ENCODE measurements at regions of chr16 and their contacts with region 1.

Region 1: DNA sequence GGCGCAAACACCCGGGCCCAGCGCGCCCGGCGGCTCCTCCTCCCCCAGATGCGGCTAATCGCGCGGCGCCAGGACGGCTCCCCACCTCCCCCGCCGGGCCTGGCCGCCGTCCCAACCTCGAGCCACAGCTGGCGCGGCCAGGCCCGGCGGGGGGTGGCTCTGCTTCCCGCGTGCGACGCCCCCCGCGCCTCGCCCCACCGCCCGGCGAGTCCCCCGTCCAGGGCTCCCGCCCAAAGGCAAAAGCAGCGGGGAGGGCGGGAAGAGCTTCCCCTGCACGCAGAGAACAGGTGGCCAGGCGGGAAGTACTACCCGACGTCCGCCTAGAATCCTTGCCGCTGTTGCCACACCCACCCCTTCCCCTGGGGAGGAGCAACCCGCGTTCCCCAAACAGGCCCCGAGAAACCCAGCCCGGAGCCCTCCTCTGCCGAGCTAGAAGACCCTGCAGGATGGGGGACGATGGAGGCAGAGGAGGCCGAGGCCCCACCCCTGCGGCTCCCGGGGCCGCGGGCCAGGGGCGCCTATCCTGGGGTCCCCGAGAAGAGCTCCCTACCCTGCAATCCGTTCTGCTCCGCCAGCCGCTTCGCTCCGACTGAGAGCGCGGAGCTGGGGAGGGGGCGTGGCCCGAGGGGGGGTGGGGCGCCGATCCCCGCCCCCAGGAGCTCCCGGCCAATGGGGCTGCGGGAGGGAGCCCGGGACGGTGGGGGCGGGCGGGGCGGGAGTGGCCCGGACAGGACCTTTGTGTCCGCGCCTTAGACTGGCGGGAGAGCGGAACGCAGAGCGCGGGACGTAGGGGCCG is at the start of gene CARHSP1:
- DNase-seq: peak; percentile 51 to 85 (median 70)
- H3K4me3 ChIP-seq: peak within 1 kb of the TSS; percentile 55 to 94 (median 77)
- H3K27ac ChIP-seq: peak within 1 kb of the TSS; percentile 66 to 98 (median 92)
- H3K27me3 ChIP-seq: no peaks in the 10 kb centered on the region
- CTCF ChIP-seq: peak in 3 of 56 donors; percentile 8 to 30 (median 17)
- total RNA-seq, gene CARHSP1: 19.2 to 95.1 (median 46.3) TPM

Region 2: DNA sequence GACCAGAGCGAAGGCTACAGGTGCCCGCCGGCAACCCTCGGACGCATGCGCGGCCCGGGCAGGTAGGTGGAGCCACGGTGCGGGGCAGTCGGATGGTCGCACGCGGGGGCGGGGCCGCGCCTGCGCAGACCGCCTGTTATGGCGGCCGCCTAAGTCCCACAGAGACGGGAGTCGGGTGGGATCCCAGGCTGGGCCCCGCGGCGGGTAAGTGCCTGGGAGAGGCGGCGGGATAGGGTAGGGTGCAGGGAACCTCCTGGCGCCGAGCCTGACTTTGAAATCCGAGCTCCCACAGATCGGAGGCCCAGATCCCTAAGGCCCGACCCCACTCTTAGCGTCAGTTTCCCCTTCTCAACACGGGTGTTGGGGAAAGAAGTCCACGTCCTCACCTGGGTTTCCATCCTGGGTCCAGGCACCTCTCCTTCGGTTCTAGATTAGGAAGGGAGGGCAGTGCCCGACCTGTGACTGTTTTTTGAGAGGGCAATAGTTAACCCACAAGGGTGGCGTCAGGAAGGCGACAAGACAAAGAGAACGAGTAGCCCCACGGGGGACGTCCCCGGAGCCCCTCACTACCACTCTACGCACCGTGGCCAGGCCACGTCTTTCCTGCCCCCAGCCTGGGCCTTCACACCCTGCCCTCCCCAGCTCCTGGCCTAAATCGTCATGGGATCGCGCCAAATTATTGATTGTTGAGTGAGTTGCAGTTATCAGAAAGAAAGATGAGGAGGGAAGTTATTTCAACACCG is 246.9 kb before region 1 on chr16 and contains the start of gene METTL22:
- intact Hi-C with region 1: loop called in 1 of 2 experiments (anchors 5 kb)
- DNase-seq: peak; percentile 83 to 94 (median 88)
- H3K4me3 ChIP-seq: peak within 1 kb of the TSS; percentile 46 to 100 (median 91)
- H3K27ac ChIP-seq: peak within 1 kb of the TSS in 53 of 59 donors; percentile 7 to 93 (median 72)
- H3K27me3 ChIP-seq: no peaks in the 10 kb centered on the region
- CTCF ChIP-seq: peak in 32 of 56 donors; percentile 1 to 54 (median 24)
- total RNA-seq, gene METTL22: 22.8 to 59.0 (median 39.5) TPM

Region 3: GRCh38 chr16:8674413-8675022 is 194.1 kb before region 1 on chr16 and contains the start of gene ABAT:
- intact Hi-C with region 1: loop called (anchors 5 to 10 kb)
- DNase-seq: peak; percentile 86 to 99 (median 92)
- H3K4me3 ChIP-seq: peak within 1 kb of the TSS; percentile 62 to 98 (median 85)
- H3K27ac ChIP-seq: peak within 1 kb of the TSS in 46 of 59 donors; percentile 2 to 85 (median 65)
- H3K27me3 ChIP-seq: no peaks in the 10 kb centered on the region
- CTCF ChIP-seq: peak in 21 of 56 donors; percentile 11 to 39 (median 22)
- total RNA-seq, gene ABAT: 83.4 to 281 (median 204) TPM

Region 4: DNA sequence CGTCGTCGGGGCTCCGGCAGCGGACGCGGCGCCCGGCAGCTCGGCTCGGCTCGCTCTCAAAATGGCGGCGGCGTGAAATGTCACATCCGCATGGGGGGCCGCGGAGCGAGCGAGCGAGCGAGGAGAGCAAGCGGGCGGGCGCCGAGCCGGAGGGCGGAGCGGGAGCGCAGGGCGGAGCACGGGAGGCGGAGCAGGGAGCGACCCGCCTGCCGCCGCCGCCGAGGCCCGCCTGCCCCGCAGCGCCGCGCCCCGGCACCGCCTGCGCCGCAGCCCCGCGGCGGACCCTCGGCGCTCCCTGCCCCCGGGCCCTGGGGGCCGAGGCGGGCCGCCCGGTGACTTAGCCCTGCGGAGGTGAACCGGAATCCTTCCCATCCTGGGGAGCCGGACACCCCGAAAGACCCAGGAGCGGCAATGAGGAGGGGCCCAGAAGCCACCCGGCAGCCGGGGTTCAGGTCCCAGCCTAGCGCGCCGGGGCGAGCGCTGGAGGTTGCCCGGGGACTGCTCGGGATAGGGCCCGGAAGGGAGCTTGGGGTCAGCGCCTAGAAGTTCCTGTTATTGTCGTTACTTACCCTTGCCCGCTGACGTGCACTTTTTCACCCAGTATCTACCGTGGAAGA is 95.3 kb after region 1 on chr16 and contains the start of gene USP7:
- intact Hi-C with region 1: loop called in 1 of 2 experiments (anchors 5 kb)
- DNase-seq: peak; percentile 68 to 93 (median 83)
- H3K4me3 ChIP-seq: peak within 1 kb of the TSS; percentile 56 to 94 (median 80)
- H3K27ac ChIP-seq: peak within 1 kb of the TSS in 50 of 59 donors; percentile 41 to 91 (median 75)
- H3K27me3 ChIP-seq: no peaks in the 10 kb centered on the region
- CTCF ChIP-seq: peak in 1 of 56 donors; percentile 4
- total RNA-seq, gene USP7: 82.3 to 157 (median 115) TPM

Region 5: DNA sequence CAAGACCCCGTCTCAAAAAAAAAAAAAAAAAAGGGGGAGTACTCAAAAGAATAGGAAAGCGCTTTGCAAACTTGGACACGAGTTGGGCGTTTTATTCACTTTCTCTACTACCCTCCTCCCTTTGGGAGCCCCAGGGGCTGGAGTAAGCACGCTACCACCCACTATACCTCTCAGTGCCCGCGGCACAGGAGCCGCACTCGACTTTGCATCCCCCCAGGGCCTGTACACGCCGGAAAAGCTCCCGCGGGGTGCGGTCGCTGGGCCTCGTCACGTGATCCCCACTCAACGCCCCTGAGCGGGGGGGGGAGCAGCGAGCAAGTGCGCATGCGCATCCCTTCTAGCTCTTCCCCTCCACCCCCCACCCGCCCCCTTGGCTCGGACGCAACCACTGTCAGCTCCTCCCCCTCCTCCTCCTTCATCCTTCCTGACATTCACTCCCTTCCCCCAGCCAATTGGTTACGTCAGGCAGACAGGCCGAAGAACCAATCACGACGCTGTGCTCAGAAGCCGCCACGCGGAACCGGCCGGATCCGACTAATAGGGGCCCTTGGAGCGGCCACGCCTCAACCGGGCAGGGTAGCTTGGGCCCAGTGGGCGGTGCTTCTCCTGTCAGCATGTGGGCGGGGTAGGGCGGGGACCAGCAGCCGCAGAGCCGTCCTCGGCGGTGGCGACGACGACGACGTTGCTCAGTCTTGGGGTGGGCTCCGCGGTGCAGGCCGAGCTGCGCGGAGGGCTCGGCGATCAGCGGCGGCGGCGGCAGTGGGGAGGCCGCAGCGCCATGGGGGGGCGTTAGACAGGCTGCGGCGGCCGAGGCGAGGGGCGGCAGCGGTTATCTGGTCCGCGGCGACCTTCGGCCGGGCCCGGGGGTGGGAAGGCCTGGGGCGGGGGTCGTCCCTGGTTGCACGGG is 222.6 kb after region 1 on chr16 and contains the start of gene HAPSTR1:
- intact Hi-C with region 1: loop called in 1 of 2 experiments (anchors 5 kb)
- DNase-seq: peak; percentile 99 to 100 (median 100)
- H3K4me3 ChIP-seq: peak within 1 kb of the TSS; percentile 67 to 98 (median 89)
- H3K27ac ChIP-seq: peak within 1 kb of the TSS; percentile 81 to 100 (median 96)
- H3K27me3 ChIP-seq: no peaks in the 10 kb centered on the region
- CTCF ChIP-seq: peak in 4 of 56 donors; percentile 15 to 23 (median 17)
- total RNA-seq, gene HAPSTR1: 60.1 to 117 (median 88.9) TPM